ENCODE measurements at regions of chr19 and their contacts with region 1.

Region 1: GRCh38 chr19:5814852-5815246 is 10.0 kb downstream of the NRTN start:
- DNase-seq: no peak
- ATAC-seq: no peak
- H3K4me3 ChIP-seq: no peak overlapping the region
- H3K27ac ChIP-seq: no peak overlapping the region
- H3K4me1 ChIP-seq: no peaks in the 10 kb centered on the region
- H3K27me3 ChIP-seq: no peaks in the 10 kb centered on the region
- CTCF ChIP-seq: no peak
- POLR2A ChIP-seq: no peak
- RAD21 ChIP-seq: no peak

Region 2: GRCh38 chr19:5967994-5968430 is 153.2 kb after region 1 on chr19:
- CTCF ChIA-PET with region 1: no interaction called
- POLR2A ChIA-PET with region 1: no interaction called
- RAD21 ChIA-PET with region 1: no interaction called
- intact Hi-C with region 1: loop called (anchors 5 kb)
- DNase-seq: peak; percentile 50
- ATAC-seq: peak; percentile 88
- H3K4me3 ChIP-seq: no peak overlapping the region
- H3K27ac ChIP-seq: peak overlapping the region; percentile 45
- H3K4me1 ChIP-seq: peaks cover 0 to 12% of the 10 kb centered on the region in 2 experiments; a peak in 2 of 4 replicates
- H3K27me3 ChIP-seq: no peaks in the 10 kb centered on the region
- CTCF ChIP-seq: peak; percentile 56 to 89 (median 86)
- POLR2A ChIP-seq: no peak
- RAD21 ChIP-seq: peak; percentile 63

Measured in HCT116 (cell line).